Right ventricle myocardium inferior (tissue), 1 donor: ENCODE measurements at regions of chr12 and their contacts with region 1.

Region 1: DNA sequence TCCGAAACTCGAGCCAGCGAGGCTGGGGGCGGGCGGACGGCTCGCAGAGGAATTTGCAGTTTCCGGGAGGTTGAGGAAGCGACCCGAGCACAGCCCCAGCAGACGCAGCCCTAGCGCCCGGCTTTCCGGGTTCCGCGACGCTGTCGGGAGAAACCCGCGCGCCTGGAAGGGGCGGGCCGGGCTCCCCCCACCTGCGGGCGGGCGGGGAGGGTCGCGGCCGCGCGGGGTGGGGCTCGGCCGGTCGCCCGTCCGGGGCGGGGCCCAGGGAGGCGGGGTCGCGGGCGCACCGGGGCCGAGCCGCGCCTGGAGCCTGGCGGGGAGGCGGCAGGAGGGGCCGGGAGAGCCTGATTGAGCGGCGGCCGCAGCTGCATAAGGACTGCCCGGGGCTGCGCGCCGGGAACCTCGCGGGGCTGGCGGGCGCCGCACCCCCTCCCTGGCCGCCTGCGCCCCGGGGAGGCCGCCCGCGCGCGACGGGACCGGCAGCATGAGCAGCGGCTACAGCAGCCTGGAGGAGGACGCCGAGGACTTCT is at the start of gene RASSF3:
- DNase-seq: peak; percentile 90
- ATAC-seq: peak; percentile 88
- total RNA-seq, gene RASSF3: 123 TPM

Region 2: GRCh38 chr12:64518396-64518795 is 91.8 kb before region 1 on chr12:
- intact Hi-C with region 1: no loop called
- DNase-seq: no peak
- ATAC-seq: no peak

Region 3: DNA sequence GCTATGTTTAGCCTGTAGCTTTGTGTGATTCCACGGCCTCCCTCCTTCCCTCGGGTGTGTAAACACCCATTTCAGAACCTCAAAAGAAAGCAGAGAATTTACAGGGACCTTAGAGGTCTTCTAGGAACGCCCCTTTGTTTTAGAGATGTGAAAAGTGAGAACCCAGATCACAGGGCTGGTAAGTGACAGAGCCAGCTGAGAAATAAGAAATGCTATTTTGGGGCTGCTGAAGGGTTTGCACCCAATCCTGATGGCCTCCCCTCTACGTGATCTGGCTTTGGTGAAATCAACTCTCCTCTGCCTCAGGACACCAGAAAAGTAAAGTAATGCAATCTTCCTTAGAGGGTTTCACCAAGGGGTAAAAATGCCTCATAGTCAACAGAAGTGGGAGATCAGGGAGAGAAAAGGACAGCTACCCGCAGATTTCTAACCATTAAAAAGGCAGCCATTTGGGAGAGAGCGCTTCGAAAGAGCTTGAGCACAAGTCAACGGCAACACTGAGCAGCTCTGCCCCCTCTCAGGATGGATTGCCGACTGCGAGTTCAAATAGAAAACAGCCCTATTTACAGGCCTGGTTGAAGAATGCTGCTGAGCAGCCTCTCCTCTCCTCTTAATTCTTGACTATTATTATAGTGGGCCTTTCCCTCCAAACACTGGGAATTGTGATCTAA is 78.4 kb before region 1 on chr12:
- intact Hi-C with region 1: no loop called
- DNase-seq: no peak
- ATAC-seq: no peak

Region 4: DNA sequence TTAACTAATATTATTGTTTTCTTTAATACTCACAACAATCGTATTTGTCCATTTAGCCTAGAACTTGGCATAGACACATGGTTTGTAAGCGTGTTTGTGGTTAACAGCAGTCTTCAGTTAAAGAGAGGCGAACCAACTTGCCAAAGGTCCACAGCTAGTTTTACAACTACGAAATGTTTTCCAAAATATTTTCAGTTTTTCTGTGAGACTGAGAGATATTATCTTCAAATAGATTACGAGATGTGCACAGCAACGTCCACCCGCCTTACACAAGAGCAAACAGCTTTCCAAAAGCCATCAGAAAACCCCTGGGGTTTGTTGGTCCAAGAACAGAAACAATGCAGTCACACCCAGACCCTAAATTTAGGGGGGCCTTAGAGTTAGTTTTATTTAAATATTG is 58.5 kb before region 1 on chr12:
- intact Hi-C with region 1: loop called (anchors 5 kb)
- DNase-seq: no peak
- ATAC-seq: peak; percentile 36

Region 5: DNA sequence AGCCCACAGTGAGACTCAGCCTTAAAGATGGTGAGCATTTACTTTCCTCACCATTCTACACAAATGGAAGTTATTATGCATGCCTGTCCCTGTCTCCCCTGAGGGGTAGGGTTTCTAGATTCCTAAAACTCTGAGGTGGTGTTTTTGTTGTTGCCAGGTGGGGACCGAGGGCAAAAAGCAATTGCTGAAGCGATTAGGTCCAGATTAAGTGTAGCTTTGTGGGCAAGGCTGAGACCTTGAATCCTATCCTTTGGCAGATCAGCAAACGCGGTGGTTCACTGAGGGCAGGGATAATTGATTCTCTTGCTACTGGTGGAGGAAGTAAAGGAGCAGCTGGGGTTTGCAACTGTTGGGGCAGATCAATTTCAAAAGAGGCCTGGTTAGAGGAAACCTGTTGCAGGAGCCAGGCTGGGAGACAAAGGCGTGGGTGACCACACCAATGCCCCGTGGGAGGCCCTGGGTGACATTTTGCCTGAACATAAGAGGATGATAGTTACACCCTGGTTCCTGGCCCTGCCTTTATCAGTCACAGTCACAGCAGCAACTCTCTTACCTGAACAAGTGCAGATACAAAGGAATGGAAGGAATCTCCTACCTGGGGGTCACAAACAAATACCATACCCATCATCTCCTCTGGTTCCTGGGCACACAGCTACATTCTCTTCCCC is 43.3 kb before region 1 on chr12:
- intact Hi-C with region 1: loop called (anchors 5 kb)
- DNase-seq: no peak
- ATAC-seq: no peak

Region 6: DNA sequence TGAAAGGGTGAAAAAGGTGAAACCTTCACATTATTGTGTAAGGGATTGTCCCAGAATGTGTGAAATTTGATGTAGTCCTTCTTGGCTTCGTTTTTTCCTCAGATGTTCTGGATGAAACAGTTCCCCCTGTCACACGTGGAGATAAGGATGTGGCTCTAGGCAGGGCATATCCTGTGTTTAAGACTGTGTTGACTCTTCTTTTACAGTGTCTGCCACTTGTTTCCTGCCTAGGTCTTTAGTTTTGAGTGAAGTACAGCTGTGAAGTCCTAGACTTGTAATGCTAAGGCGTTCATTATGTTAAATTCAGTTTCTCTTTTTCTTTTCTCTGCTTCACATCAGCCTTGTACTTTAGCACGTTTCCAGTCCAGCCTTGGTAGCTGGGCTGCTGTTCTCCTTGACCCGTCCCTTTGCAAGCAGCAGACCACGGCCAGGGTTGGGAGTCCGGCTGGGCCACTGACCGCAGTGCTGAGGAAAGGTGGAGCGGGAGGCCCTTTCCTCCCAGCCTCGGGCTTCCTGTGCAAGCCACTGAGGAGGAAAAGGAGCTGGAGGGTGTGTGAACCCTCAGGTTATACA is 59.1 kb after region 1 on chr12:
- intact Hi-C with region 1: no loop called
- DNase-seq: peak; percentile 82
- ATAC-seq: peak; percentile 29

Region 7: GRCh38 chr12:64680235-64680634 is 70.0 kb after region 1 on chr12:
- intact Hi-C with region 1: loop called (anchors 2 kb)
- DNase-seq: no peak
- ATAC-seq: no peak

Region 8: DNA sequence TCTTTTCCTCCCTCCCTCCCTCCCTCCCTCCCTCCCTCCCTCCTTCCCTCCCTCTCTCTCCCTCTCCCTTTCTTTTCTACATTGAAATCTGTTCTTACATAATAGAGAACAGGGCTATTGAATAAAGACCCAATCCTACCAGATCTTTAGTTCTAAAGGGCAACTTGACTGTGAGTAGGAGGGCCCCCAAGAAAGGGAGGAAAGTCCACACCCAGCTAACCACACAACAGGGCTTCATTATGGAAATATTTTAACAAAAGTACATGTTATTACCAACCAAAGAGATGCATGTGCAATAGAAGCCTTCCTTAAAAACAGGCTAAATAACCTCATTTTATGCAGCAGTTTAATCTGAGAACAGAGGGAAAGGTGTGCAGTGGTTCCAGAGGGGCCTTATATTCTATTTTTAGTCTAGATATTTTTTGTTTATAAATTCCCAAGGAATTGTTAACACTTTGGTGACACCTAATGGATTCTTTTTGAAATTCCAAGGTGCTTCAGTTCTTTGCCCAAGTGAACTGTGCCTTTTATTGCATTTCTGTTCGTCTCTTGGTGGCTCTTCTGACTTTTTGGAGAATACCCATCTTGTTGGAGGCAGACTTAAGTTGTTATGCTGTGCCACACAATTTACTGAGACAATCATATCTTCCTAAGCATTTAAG is 86.0 kb after region 1 on chr12:
- intact Hi-C with region 1: loop called (anchors 2 kb)
- DNase-seq: no peak
- ATAC-seq: no peak